K562 (cell line): ENCODE measurements at regions of chr6 and their contacts with region 1.

Region 1: DNA sequence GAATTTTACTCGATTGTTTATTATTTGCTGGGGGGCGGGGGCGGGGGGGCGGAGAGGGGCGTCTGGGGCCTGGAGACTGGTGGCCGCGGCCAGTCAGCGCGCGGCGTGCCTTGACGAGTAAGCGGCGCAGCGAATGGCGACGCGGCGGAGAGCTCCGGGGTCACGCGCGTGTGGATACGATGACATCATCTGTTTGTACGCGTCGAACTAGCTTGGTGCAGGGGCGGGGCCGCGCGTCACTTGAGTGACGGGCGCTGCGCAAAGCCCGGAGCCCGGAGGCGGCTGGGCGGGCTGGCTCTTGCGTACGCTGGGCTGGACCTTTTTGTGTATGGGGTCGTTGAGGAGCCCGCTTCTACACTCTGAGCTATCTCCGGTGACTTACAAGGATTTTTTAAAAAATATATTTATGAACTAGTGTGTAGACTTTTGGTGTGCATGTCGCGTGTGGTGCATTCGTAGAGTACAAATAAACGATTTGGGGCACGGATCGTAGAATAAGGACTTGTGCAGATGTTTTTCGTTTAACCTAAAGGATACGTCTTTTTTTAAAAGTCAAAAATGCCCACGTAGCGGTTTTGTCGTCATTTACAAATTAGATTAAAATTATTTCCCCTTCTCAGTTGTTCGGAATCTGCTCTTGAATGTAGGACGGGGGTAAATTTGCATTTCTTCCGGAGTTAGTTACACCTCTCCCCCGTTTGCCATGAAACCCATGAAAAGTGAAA is 2.2 kb upstream of the FOXO3 start:
- DNase-seq: peak; percentile 84 to 99 (median 88)
- ATAC-seq: peak; percentile 74
- H3K4me3 ChIP-seq: peak overlapping the region; percentile 82
- H3K27ac ChIP-seq: peak overlapping the region; percentile 99
- H3K4me1 ChIP-seq: peaks cover 23 to 44% of the 10 kb centered on the region in 2 experiments
- H3K27me3 ChIP-seq: no peaks in the 10 kb centered on the region
- CTCF ChIP-seq: no peak
- EP300 ChIP-seq: peak; percentile 18; the same call in 1 of the 2 replicates
- POLR2A ChIP-seq: no peak
- RAD21 ChIP-seq: no peak

Region 2: DNA sequence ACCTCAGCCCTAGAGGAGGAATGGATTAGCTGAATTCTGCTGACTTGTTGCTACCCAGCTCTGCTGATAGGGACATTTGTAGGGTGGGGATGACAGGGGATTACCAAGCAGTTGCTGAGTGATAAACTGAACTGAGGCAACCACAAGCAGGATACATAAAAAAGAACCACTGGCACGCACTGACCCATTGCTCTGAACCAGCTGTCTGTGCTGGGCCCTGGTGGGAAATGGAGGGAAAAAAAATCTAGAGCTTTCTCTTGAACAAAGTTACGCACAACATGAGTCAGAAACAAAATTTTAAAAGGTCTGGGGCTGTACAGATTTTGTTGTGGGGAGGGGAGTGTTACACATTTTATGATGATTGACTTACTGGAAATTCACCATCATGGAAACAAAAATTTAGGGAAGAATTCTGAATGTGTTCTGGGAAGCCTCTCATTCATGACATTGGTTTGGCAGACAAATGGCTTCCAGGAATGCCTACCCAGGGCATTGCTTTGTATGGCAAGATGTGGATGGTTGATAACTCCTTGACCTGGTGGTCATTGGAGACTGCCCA is 39.9 kb after region 1 on chr6:
- CTCF ChIA-PET with region 1: no interaction called
- POLR2A ChIA-PET with region 1: interaction called, 5 read pairs
- in situ Hi-C with region 1: no loop called
- intact Hi-C with region 1: loop called (anchors 2 kb)
- DNase-seq: peak; percentile 37 to 86 (median 63)
- ATAC-seq: peak; percentile 98
- H3K4me3 ChIP-seq: no peak overlapping the region
- H3K27ac ChIP-seq: no peak overlapping the region
- H3K4me1 ChIP-seq: peaks cover 11 to 26% of the 10 kb centered on the region in 2 experiments
- H3K27me3 ChIP-seq: no peaks in the 10 kb centered on the region
- CTCF ChIP-seq: no peak
- EP300 ChIP-seq: peak; percentile 83
- POLR2A ChIP-seq: no peak
- RAD21 ChIP-seq: no peak

Region 3: DNA sequence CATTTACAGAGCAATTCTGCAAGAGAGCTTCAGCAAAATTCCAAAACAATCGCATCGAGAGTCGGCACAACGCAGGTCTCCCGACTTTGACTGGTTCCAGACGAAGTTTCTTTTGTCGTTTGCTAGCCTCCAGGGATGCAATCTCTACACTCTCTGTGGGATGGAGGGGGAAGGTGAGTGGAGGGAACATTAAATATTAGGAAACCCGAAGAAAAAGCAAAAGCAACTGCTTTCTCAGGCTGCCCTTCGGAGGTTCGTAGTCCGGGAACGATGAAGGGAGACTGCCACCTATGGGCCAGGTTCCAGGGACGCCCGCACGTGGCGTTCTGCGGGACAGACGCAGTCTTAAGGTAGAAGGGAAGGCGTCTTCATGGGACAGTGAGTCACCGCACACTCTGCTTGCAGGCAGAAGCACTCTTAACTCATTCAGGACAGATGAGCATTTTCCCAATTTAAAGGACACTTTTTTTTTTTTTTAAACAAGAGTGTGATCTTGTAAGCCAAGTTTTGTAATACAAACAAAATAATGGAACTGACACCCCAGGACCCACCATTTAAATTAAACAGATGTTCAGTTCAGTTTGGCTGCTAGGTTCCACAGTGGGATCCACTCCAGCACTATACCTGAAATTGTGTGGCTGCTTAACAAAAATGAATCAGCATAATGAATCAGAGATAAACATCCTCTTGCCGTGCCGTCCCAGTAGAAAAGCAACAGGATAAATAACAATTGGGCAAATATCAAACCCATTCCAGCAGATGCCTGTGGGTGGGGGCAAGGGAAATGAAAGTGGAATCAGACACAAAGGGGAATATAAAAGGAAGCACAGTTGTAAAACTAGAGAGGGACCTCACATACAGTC is 223.9 kb after region 1 on chr6:
- CTCF ChIA-PET with region 1: no interaction called
- POLR2A ChIA-PET with region 1: interaction called, 3 read pairs
- in situ Hi-C with region 1: no loop called
- intact Hi-C with region 1: loop called (anchors 5 kb)
- DNase-seq: peak; percentile 68 to 89 (median 79)
- ATAC-seq: peak; percentile 99
- H3K4me3 ChIP-seq: no peak overlapping the region
- H3K27ac ChIP-seq: no peak overlapping the region
- H3K4me1 ChIP-seq: peaks cover 0 to 9% of the 10 kb centered on the region in 2 experiments; a peak in 2 of 5 replicates
- H3K27me3 ChIP-seq: peaks cover 16 to 28% of the 10 kb centered on the region in 2 experiments
- CTCF ChIP-seq: peak; percentile 92 to 94 (median 93)
- EP300 ChIP-seq: 0 out of 2 replicates have a peak, but pooled peaks have one; percentile 8
- POLR2A ChIP-seq: no peak
- RAD21 ChIP-seq: peak; percentile 92 to 95

Region 4: GRCh38 chr6:108848116-108848868 is 289.8 kb after region 1 on chr6 and contains the start of gene ARMC2:
- CTCF ChIA-PET with region 1: no interaction called
- POLR2A ChIA-PET with region 1: interaction called, 12 read pairs
- in situ Hi-C with region 1: no loop called
- intact Hi-C with region 1: no loop called
- DNase-seq: peak; percentile 94 to 98 (median 97)
- ATAC-seq: peak; percentile 100
- H3K4me3 ChIP-seq: peak within 1 kb of the TSS; percentile 64
- H3K27ac ChIP-seq: peak within 1 kb of the TSS; percentile 29; the same call in 1 of the 3 replicates
- H3K4me1 ChIP-seq: peaks cover 5 to 9% of the 10 kb centered on the region in 2 experiments; a peak in 4 of 5 replicates
- H3K27me3 ChIP-seq: 0 out of 5 replicates have a peak, but pooled peaks cover 0 to 5% of the 10 kb centered on the region in 2 experiments
- CTCF ChIP-seq: no peak
- EP300 ChIP-seq: no peak
- POLR2A ChIP-seq: peak; percentile 67
- RAD21 ChIP-seq: no peak
- polyA plus RNA-seq, gene ARMC2: 0.39 to 0.71 TPM